T-cell (primary cell): ENCODE measurements at regions of chr5 and their contacts with region 1.

Region 1: DNA sequence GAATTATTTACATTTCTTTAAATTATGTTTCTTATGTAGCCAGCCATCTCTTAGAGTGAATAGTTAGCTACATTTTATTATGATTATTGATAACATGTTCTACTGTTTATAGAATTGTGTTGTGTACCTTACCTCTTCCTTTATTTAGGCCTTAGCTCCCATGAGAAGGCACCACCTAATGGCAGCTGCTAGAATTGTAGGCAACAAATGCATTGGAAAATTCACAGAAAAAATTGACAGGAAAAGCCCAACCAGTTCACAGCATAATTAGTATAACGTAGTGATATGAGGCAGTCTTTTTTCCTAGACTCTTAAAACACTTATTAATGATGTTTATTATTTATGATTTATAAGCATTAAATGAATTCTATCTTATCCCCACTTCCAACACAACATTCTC is 175.8 kb downstream of the WDR70 start:
- DNase-seq: no peak
- ATAC-seq: no peak
- H3K4me3 ChIP-seq: no peak overlapping the region
- H3K4me3 Mint-ChIP-seq: no peak overlapping the region
- H3K27ac ChIP-seq: no peak overlapping the region
- H3K27ac Mint-ChIP-seq: no peak overlapping the region
- H3K4me1 ChIP-seq: no peaks in the 10 kb centered on the region
- H3K4me1 Mint-ChIP-seq: peaks cover 12 to 20% (median 19%) of the 10 kb centered on the region in 3 donors
- H3K27me3 ChIP-seq: no peaks in the 10 kb centered on the region
- H3K27me3 Mint-ChIP-seq: no peaks in the 10 kb centered on the region

Region 2: DNA sequence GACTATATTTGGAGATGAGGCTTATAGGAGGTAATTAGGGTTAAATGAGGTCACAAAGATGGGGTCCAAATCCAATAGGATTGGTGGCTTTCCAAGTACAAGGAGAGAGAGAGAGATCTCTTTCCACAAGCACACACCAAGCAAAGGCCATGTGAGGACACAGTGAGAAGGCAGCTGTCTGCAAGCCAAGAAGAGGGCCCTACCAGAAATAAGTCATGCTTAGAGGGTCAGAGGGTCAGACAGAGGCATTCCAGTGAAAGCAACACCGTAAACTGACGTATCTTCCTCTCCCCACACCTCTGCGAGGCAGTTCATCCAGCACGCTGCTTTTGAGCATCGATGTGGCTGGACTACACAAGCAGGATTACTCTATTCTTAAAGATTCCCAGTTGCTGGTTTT is 860.6 kb before region 1 on chr5:
- CTCF ChIA-PET with region 1: no interaction called
- POLR2A ChIA-PET with region 1: interaction called in 1 of 2 experiments, 13 read pairs
- DNase-seq: no peak
- ATAC-seq: no peak
- H3K4me3 ChIP-seq: no peak overlapping the region
- H3K4me3 Mint-ChIP-seq: no peak overlapping the region
- H3K27ac ChIP-seq: no peak overlapping the region
- H3K27ac Mint-ChIP-seq: no peak overlapping the region
- H3K4me1 ChIP-seq: peaks cover 0 to 16% of the 10 kb centered on the region in 2 experiments
- H3K4me1 Mint-ChIP-seq: peaks cover 7 to 19% (median 16%) of the 10 kb centered on the region in 3 donors
- H3K27me3 ChIP-seq: peaks cover 0 to 24% of the 10 kb centered on the region in 2 experiments
- H3K27me3 Mint-ChIP-seq: peaks cover 4 to 13% of the 10 kb centered on the region in 2 donors

Region 3: DNA sequence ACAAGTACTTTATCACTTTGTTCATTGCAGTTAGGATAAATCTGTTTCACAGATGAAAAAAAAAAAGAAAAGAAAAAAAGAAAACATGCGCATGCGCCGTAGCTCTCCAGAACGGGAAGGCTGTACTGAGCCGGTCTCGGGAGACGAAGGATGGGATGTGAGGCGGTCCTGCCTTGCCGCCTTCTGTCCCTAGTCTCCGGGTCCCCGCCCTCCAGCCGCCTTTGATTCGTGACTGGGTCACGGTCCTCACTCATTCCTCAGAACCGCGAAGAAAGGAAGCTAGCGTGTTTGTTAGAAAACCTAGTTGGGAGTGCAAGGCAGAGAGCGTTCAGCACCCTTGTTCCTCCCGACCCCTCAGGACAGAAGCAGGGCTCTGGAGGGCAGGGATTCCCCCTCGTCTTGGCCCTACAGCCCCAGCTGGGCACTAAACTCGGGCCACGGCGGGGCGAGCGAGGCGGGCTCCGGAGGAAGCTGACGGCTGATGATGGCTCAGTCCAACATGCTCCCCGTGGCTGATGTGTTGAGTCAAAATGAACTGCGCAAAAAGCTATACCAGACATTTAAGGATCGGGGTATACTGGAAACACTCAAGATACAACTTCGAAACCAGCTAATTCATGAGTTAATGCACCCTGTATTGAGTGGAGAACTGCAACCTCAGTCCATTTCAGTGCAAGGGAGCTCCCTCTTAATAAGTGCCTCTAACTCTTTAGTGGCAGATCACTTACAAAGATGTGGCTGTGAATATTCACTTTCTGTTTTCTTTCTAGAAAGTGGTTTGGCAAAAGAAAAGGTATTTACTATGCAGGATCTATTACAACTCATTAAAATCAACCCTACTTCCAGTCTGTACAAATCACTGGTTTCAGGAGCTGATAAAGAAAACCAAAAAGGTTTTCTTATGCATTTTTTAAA is 345.8 kb before region 1 on chr5:
- CTCF ChIA-PET with region 1: no interaction called
- POLR2A ChIA-PET with region 1: no interaction called
- DNase-seq: peak in 9 of 35 experiments; percentile 1 to 45 (median 13)
- ATAC-seq: peak; percentile 34 to 65 (median 56)
- H3K4me3 ChIP-seq: peak overlapping the region in 1 of 2 donors; percentile 46
- H3K4me3 Mint-ChIP-seq: peak overlapping the region; percentile 80 to 82 (median 81)
- H3K27ac ChIP-seq: no peak overlapping the region
- H3K27ac Mint-ChIP-seq: peak overlapping the region; percentile 82 to 87
- H3K4me1 ChIP-seq: peaks cover 0 to 5% of the 10 kb centered on the region in 2 experiments
- H3K4me1 Mint-ChIP-seq: peaks cover under 1 to 3% (median 1%) of the 10 kb centered on the region in 3 donors
- H3K27me3 ChIP-seq: no peaks in the 10 kb centered on the region
- H3K27me3 Mint-ChIP-seq: no peaks in the 10 kb centered on the region

Region 4: GRCh38 chr5:37685213-37685612 is 130.3 kb after region 1 on chr5:
- CTCF ChIA-PET with region 1: no interaction called
- POLR2A ChIA-PET with region 1: no interaction called
- DNase-seq: no peak
- ATAC-seq: no peak
- H3K4me3 ChIP-seq: no peak overlapping the region
- H3K4me3 Mint-ChIP-seq: no peak overlapping the region
- H3K27ac ChIP-seq: no peak overlapping the region
- H3K27ac Mint-ChIP-seq: no peak overlapping the region
- H3K4me1 ChIP-seq: no peaks in the 10 kb centered on the region
- H3K4me1 Mint-ChIP-seq: peaks cover 2 to 20% (median 3%) of the 10 kb centered on the region in 3 donors
- H3K27me3 ChIP-seq: no peaks in the 10 kb centered on the region
- H3K27me3 Mint-ChIP-seq: no peaks in the 10 kb centered on the region